ENCODE measurements at regions of chr6 and their contacts with region 1.

Region 1: GRCh38 chr6:28399350-28400121 is at the start of gene ZSCAN12:
- DNase-seq: peak; percentile 92
- ATAC-seq: peak; percentile 91
- H3K4me3 Mint-ChIP-seq: peak within 1 kb of the TSS; percentile 89
- H3K27ac Mint-ChIP-seq: peak within 1 kb of the TSS; percentile 92
- H3K4me1 Mint-ChIP-seq: peaks cover 42% of the 10 kb centered on the region
- H3K27me3 Mint-ChIP-seq: peaks cover 15% of the 10 kb centered on the region
- total RNA-seq, gene ZSCAN12: 6.9 to 7.6 TPM

Region 2: GRCh38 chr6:27019651-27020552 is 1379.6 kb before region 1 on chr6:
- CTCF ChIA-PET with region 1: no interaction called
- POLR2A ChIA-PET with region 1: no interaction called
- intact Hi-C with region 1: no loop called
- DNase-seq: peak; percentile 70
- ATAC-seq: peak; percentile 70
- H3K4me3 Mint-ChIP-seq: peak overlapping the region; percentile 67
- H3K27ac Mint-ChIP-seq: peak overlapping the region; percentile 6
- H3K4me1 Mint-ChIP-seq: peaks cover 9% of the 10 kb centered on the region
- H3K27me3 Mint-ChIP-seq: peaks cover 39% of the 10 kb centered on the region

Region 3: GRCh38 chr6:28124102-28124970 is 275.2 kb before region 1 on chr6 and contains the start of gene ZSCAN16:
- CTCF ChIA-PET with region 1: no interaction called
- POLR2A ChIA-PET with region 1: no interaction called
- intact Hi-C with region 1: loop called in 1 of 2 experiments (anchors 1 kb)
- DNase-seq: peak; percentile 82
- ATAC-seq: peak; percentile 94
- H3K4me3 Mint-ChIP-seq: peak within 1 kb of the TSS; percentile 89
- H3K27ac Mint-ChIP-seq: peak within 1 kb of the TSS; percentile 91
- H3K4me1 Mint-ChIP-seq: peaks cover 43% of the 10 kb centered on the region
- H3K27me3 Mint-ChIP-seq: no peaks in the 10 kb centered on the region
- total RNA-seq, gene ZSCAN16: 2.1 to 2.6 TPM

Region 4: DNA sequence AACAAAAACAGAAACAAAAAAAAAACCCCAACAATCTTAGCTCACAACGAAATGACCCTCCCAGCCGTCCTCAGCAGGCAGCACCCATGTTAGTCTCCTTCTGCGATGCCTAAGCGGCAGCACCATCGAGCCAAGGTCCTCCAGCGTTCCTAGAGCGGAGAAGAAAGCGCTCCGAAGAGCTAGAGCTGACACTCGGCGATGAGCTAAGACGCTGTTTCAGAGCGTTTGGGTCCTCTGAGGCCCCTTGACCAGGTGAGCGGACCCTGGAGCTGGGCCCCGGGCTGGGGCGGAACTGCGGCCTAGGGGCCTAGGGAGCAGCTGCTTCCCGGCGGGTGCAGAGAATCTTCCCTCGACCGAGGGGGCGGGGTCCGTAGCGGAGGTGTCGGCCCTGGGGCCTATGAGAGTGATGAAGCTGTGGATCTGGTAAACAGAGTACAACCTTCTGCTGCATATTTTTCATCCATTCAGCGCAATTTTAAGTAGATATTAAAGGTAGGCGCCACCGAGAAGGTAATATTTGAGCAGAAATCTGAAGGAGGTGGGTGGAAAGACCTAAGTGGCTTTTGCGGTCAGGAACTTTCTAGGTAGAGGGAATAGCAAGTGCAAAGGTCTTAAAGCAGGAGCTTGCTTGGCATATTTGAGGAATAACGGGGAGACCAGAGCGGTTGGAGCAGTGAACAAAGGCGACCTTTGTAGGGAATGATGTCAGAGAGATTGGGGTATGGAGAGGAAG is 132.4 kb before region 1 on chr6 and contains the start of gene ZSCAN26:
- CTCF ChIA-PET with region 1: interaction called, 3 read pairs
- POLR2A ChIA-PET with region 1: interaction called, 3 read pairs
- intact Hi-C with region 1: loop called in 1 of 2 experiments (anchors 5 kb)
- DNase-seq: peak; percentile 91
- ATAC-seq: peak; percentile 90
- H3K4me3 Mint-ChIP-seq: no peak within 1 kb of the TSS
- H3K27ac Mint-ChIP-seq: no peak within 1 kb of the TSS
- H3K4me1 Mint-ChIP-seq: peaks cover 32% of the 10 kb centered on the region
- H3K27me3 Mint-ChIP-seq: no peaks in the 10 kb centered on the region
- total RNA-seq, gene ZSCAN26: 5.0 to 6.7 TPM

Region 5: GRCh38 chr6:28383235-28384142 is 16.0 kb before region 1 on chr6:
- CTCF ChIA-PET with region 1: interaction called, 21 read pairs
- POLR2A ChIA-PET with region 1: interaction called, 3 read pairs
- intact Hi-C with region 1: no loop called
- DNase-seq: peak; percentile 59
- ATAC-seq: peak; percentile 65
- H3K4me3 Mint-ChIP-seq: peak overlapping the region; percentile 61
- H3K27ac Mint-ChIP-seq: peak overlapping the region; percentile 35
- H3K4me1 Mint-ChIP-seq: peaks cover 16% of the 10 kb centered on the region
- H3K27me3 Mint-ChIP-seq: no peaks in the 10 kb centered on the region

Region 6: DNA sequence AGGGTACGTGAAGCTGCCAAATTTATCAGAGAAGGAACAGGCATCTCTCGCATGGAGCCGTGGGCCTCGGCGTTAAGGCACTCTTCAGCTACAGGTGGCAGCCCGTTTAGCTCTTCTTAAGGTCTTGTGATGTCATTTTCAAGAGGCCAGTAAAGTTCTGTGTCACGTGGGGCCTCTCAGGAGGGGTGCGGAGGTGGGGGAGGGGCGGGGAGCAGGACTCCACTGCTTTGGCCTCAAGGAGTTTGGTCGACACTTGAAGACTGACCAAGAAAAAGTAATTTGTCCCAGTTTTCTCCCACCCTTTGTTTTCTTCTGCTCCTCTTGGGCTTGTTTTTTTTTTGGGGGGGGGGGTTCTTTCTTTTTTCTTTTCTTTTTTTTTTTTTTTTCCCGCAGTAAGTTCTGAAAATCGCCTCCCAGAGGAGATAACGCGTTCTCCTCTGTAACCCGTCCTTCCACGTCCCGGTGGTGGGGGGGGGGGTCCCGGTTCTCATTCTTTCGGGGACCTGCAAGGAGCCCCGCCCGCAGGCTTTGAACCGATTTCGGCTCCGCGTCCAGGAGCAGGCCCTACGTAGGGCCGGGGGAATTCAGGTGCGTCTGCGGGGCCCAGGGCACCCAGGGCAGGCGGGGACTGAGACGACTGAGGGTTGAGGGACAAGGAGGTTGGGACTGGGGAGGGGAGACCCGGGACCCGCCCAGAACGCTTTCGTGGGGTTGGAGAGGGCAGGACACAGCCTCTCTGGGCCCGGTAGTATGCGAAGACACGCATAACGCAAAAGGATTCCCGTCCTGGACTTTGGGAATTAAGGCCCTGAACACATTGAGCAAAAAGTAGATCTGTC is 90.0 kb after region 1 on chr6:
- CTCF ChIA-PET with region 1: no interaction called
- POLR2A ChIA-PET with region 1: no interaction called
- intact Hi-C with region 1: loop called in 1 of 2 experiments (anchors 1 kb)
- DNase-seq: peak; percentile 80
- ATAC-seq: peak; percentile 80
- H3K4me3 Mint-ChIP-seq: peak overlapping the region; percentile 72
- H3K27ac Mint-ChIP-seq: peak overlapping the region; percentile 79
- H3K4me1 Mint-ChIP-seq: peaks cover 16% of the 10 kb centered on the region
- H3K27me3 Mint-ChIP-seq: peaks cover 44% of the 10 kb centered on the region